ENCODE measurements at regions of chr6 and their contacts with region 1.

Region 1: GRCh38 chr6:43391440-43392031 is 22.1 kb upstream of the ZNF318 start:
- DNase-seq: peak in 3 of 4 experiments; percentile 27 to 69 (median 56)
- ATAC-seq: peak; percentile 70
- H3K4me3 ChIP-seq: no peak overlapping the region
- H3K27ac ChIP-seq: no peak overlapping the region
- H3K4me1 ChIP-seq: peaks cover 12 to 28% of the 10 kb centered on the region in 2 experiments
- H3K27me3 ChIP-seq: peaks cover 2 to 12% of the 10 kb centered on the region in 2 experiments; a peak in 4 of 5 replicates
- CTCF ChIP-seq: no peak
- EP300 ChIP-seq: peak; percentile 41
- POLR2A ChIP-seq: no peak
- RAD21 ChIP-seq: no peak; a peak in 1 of 4 replicates

Region 2: GRCh38 chr6:43263314-43264178 is 128.0 kb before region 1 on chr6:
- CTCF ChIA-PET with region 1: no interaction called
- POLR2A ChIA-PET with region 1: no interaction called
- in situ Hi-C with region 1: no loop called
- intact Hi-C with region 1: loop called (anchors 5 kb)
- DNase-seq: peak; percentile 79 to 89 (median 83)
- ATAC-seq: peak; percentile 94
- H3K4me3 ChIP-seq: no peak overlapping the region
- H3K27ac ChIP-seq: no peak overlapping the region
- H3K4me1 ChIP-seq: peaks cover 16 to 40% of the 10 kb centered on the region in 2 experiments
- H3K27me3 ChIP-seq: peaks cover 5 to 15% of the 10 kb centered on the region in 2 experiments; a peak in 3 of 5 replicates
- CTCF ChIP-seq: peak; percentile 94 to 98 (median 96)
- EP300 ChIP-seq: no peak
- POLR2A ChIP-seq: no peak
- RAD21 ChIP-seq: peak; percentile 94 to 97

Region 3: DNA sequence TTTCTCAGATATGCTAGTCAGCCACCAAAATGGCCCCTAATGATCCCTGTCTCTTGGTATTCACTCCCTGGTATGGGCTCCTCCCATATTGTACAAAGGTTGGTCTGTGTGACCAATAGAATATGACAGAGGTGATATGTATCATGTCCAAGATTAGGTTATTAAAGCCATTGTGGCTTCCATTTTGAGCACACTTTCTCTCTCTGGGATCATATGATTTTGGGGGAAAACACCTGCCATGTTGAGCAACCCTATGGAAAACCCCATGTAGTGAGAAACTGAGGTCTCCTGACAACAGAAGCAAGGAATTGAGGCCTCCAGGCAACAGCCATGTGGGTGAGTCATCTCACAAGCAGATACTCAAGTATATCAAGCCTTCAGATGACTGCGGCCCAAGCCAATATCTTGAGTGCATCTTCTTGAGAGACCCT is 15.0 kb before region 1 on chr6:
- CTCF ChIA-PET with region 1: no interaction called
- POLR2A ChIA-PET with region 1: interaction called, 18 read pairs
- in situ Hi-C with region 1: no loop called
- intact Hi-C with region 1: no loop called
- DNase-seq: no peak
- ATAC-seq: no peak
- H3K4me3 ChIP-seq: no peak overlapping the region
- H3K27ac ChIP-seq: no peak overlapping the region
- H3K4me1 ChIP-seq: peaks cover 0 to 4% of the 10 kb centered on the region in 2 experiments; a peak in 2 of 5 replicates
- H3K27me3 ChIP-seq: peaks cover under 1 to 6% of the 10 kb centered on the region in 2 experiments; a peak in 2 of 5 replicates
- CTCF ChIP-seq: no peak
- EP300 ChIP-seq: no peak
- POLR2A ChIP-seq: no peak
- RAD21 ChIP-seq: no peak

Region 4: GRCh38 chr6:43477235-43478007 is 85.9 kb after region 1 on chr6 and contains the start of gene TJAP1:
- CTCF ChIA-PET with region 1: no interaction called
- POLR2A ChIA-PET with region 1: no interaction called
- in situ Hi-C with region 1: no loop called
- intact Hi-C with region 1: no loop called
- DNase-seq: peak; percentile 95 to 98 (median 96)
- ATAC-seq: peak; percentile 99
- H3K4me3 ChIP-seq: peak within 1 kb of the TSS; percentile 80
- H3K27ac ChIP-seq: peak within 1 kb of the TSS; percentile 71
- H3K4me1 ChIP-seq: peaks cover 0 to 19% of the 10 kb centered on the region in 2 experiments; a peak in 4 of 5 replicates
- H3K27me3 ChIP-seq: no peaks in the 10 kb centered on the region
- CTCF ChIP-seq: no peak
- EP300 ChIP-seq: peak; percentile 22; the same call in 1 of the 2 replicates
- POLR2A ChIP-seq: peak; percentile 95
- RAD21 ChIP-seq: no peak
- polyA plus RNA-seq, gene TJAP1: 0.06 to 0.29 TPM

Region 5: DNA sequence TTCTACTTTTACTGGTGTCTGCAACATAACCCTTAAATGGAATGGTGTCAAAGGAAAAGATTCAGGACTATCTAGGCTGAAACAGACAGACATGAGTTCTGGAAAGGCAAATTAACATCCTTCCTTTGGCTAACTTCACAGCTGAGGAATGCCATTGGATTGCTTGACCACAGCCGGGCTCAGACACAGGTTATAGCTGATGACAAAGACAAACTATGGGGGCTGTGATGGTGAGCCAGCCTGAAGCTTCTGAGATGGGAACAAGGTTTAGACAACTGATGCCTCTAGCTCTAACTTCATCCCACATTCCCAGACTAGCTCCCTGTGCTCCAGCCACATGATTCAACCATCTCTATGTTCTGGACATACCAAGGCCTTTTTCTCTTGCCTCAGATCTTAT is 140.7 kb after region 1 on chr6:
- CTCF ChIA-PET with region 1: no interaction called
- POLR2A ChIA-PET with region 1: no interaction called
- in situ Hi-C with region 1: no loop called
- intact Hi-C with region 1: no loop called
- DNase-seq: no peak
- ATAC-seq: no peak
- H3K4me3 ChIP-seq: no peak overlapping the region
- H3K27ac ChIP-seq: no peak overlapping the region
- H3K4me1 ChIP-seq: no peaks in the 10 kb centered on the region
- H3K27me3 ChIP-seq: no peaks in the 10 kb centered on the region
- CTCF ChIP-seq: no peak
- EP300 ChIP-seq: no peak
- POLR2A ChIP-seq: no peak
- RAD21 ChIP-seq: no peak